ENCODE measurements at regions of chr1 and their contacts with region 1.

Region 1: DNA sequence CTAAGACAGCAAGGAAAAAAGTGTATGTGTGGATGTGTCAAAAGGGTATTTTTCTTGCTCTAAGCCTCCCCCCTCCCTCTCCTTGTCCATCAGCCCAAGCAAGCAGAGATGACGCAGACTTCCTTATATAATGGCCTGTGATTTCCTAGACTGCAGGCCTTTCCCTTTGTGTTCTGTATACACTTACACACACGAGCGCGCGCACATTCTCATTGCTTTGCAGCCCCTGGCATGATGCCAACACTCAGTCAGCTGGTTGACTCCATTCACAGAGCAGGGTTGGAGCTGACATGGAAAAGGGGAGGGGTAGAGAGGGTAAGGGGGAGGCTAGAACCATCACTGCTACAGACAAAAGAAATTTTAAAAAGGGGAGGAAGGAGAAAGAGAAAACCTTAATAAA is 41.8 kb downstream of the GATAD2B start:
- DNase-seq: no peak
- ATAC-seq: peak; percentile 62
- H3K4me3 Mint-ChIP-seq: no peak overlapping the region
- H3K27ac Mint-ChIP-seq: no peak overlapping the region
- H3K4me1 Mint-ChIP-seq: peaks cover 27% of the 10 kb centered on the region
- H3K27me3 Mint-ChIP-seq: no peaks in the 10 kb centered on the region
- CTCF ChIP-seq: no peak

Region 2: DNA sequence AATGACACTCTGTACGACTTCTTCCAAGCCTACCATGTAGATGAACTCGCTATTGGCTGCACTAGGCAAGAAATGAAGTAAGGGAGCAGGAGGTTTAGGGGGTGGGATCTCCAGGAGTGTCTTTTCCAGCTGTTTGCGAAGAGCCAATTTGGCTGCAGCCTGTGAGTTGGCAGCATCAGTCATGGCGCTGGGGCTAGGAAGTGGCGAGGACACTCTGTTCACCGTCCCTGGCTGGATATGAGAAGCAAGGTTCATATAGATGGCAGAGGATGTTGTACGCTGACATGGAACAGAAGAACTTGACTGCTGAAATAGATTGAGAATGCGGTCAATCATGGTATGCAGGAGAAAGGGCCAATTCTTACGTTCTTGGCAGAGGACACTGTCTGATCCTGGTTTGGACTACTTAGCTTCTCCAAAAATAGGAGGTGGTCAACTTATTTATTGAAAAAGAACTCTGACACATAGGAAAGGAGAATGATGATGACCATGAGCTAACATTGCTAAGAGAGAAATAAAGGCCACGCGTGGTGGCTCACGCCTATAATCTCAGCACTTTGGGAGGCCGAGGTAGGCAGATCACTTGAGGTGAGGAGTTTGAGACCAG is 64.6 kb before region 1 on chr1:
- CTCF ChIA-PET with region 1: no interaction called
- POLR2A ChIA-PET with region 1: no interaction called
- intact Hi-C with region 1: no loop called
- DNase-seq: no peak
- ATAC-seq: no peak
- H3K4me3 Mint-ChIP-seq: no peak overlapping the region
- H3K27ac Mint-ChIP-seq: no peak overlapping the region
- H3K4me1 Mint-ChIP-seq: peaks cover 3% of the 10 kb centered on the region
- H3K27me3 Mint-ChIP-seq: no peaks in the 10 kb centered on the region
- CTCF ChIP-seq: no peak

Region 3: DNA sequence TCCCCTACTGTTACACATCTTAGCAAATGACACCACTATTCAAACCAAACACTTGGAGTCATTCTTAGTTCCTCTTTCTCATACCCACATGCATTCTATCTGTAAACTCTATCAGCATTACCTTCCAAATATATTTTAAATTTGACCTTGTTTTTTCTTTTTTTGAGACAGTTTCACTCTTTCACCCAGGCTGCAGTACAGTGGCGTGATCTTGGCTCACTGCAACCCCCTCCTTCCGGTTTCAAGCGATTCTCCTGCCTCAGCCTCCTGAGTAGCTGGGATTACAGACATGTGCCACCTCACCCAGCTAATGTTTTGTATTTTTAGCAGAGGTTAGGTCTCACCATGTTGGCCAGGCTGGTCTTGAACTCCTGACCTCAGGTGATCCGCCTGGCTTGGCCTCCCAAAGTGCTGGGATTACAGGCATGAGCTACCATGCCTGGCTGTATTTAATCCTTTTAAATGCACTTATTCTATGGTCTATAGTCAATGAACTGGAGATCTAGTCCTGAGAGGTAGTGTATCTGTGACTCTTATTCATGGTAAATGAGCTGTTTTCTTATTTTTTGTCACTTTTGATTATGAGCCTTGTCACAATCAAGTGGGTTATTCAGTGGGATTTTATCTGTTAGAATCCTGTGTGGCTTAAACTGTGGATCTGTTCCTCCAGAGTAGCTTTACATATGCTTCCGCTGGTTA is 31.3 kb before region 1 on chr1:
- CTCF ChIA-PET with region 1: no interaction called
- POLR2A ChIA-PET with region 1: no interaction called
- intact Hi-C with region 1: loop called (anchors 5 kb)
- DNase-seq: no peak
- ATAC-seq: peak; percentile 83
- H3K4me3 Mint-ChIP-seq: peak overlapping the region; percentile 39
- H3K27ac Mint-ChIP-seq: peak overlapping the region; percentile 63
- H3K4me1 Mint-ChIP-seq: peaks cover 62% of the 10 kb centered on the region
- H3K27me3 Mint-ChIP-seq: no peaks in the 10 kb centered on the region
- CTCF ChIP-seq: no peak

Region 4: GRCh38 chr1:154583773-154584172 is 702.8 kb after region 1 on chr1:
- CTCF ChIA-PET with region 1: no interaction called
- POLR2A ChIA-PET with region 1: no interaction called
- intact Hi-C with region 1: no loop called
- DNase-seq: no peak
- ATAC-seq: no peak
- H3K4me3 Mint-ChIP-seq: no peak overlapping the region
- H3K27ac Mint-ChIP-seq: peak overlapping the region; percentile 78
- H3K4me1 Mint-ChIP-seq: peaks cover 20% of the 10 kb centered on the region
- H3K27me3 Mint-ChIP-seq: no peaks in the 10 kb centered on the region
- CTCF ChIP-seq: no peak

Measured in activated B cell treated with CpG ODN at 0.5 μM for 24 hours (primary cell).